ENCODE measurements at regions of chr14 and their contacts with region 1.

Region 1: DNA sequence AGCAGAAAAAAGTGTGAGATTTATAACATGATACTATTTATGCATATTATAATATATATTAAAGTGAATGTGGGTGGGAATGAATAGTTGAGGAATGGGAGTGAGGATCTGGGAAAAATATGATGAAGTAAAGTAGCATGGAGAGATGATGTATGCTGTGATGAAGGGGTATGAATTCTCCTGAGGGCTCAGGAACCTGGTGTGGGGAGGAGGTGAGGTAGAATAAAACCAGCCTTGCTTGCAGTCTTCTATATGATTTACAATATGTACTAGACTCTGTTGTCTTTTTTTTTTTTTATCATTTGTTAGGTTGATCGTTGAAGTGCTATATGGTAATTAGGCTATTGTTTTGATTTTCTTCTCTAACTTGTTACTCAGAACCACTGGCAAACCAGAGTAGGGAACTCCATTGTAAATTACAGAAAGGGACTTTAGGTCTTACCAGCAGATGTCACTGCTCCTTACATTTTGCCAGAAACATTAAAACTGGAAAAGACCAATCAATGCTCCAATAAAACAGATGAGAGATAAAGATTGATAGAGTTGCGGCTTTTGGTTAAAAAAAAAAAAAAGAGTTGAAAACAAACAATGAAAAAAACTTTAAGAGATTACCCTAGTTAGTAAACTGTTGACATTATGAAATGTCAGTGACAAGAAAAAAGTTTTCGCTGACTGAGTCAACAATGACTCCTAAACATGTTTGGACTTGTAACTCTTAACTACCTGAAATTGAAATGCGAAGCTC is 39.9 kb downstream of the ATL1 start:
- DNase-seq: no peak
- ATAC-seq: peak in 2 of 4 donors; percentile 68 to 88
- H3K4me3 ChIP-seq: no peak overlapping the region
- H3K27ac ChIP-seq: no peak overlapping the region
- H3K4me1 ChIP-seq: no peaks in the 10 kb centered on the region
- H3K27me3 ChIP-seq: no peaks in the 10 kb centered on the region
- CTCF ChIP-seq: peak; percentile 53

Region 2: GRCh38 chr14:50667996-50668825 is 68.3 kb after region 1 on chr14 and contains the start of gene SAV1:
- intact Hi-C with region 1: loop called in 1 of 2 experiments (anchors 5 kb)
- DNase-seq: peak; percentile 86 to 91
- ATAC-seq: peak; percentile 94 to 95 (median 95)
- H3K4me3 ChIP-seq: peak within 1 kb of the TSS; percentile 87
- H3K27ac ChIP-seq: peak within 1 kb of the TSS; percentile 97
- H3K4me1 ChIP-seq: peaks cover 12% of the 10 kb centered on the region
- H3K27me3 ChIP-seq: no peaks in the 10 kb centered on the region
- CTCF ChIP-seq: no peak
- total RNA-seq, gene SAV1: 18.1 to 37.1 (median 24.8) TPM

Region 3: DNA sequence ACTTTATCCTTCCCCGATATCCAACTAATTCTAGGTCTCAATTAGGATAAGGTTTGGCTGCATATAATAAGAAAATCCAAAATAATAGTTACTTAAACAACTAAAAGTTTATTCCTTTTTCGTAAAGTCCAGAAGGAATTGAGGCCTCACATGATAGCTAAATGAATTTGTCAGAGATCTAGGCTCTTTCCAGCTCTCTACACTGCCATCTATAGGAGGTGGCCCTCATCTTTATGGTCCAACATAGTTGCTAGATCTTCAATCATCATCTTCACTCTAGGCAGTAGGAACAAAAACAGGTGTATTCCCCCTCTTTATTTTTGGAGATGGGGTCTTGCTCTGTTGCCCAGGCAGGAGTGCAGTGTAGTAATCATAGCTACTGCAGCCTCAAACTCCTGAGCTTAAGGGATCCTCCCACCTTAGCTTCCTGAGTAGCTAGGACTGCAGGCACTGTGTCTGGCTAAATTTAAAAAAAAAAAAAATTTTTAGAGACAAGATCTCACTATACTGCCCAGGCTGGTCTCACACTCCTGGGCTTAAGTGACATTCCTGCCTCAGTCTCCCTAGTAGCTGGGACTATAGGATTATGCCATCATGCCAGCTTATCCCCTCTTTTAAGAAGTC is 114.7 kb after region 1 on chr14:
- intact Hi-C with region 1: loop called (anchors 5 to 10 kb)
- DNase-seq: no peak
- ATAC-seq: peak in 2 of 4 donors; percentile 59 to 66
- H3K4me3 ChIP-seq: no peak overlapping the region
- H3K27ac ChIP-seq: no peak overlapping the region
- H3K4me1 ChIP-seq: no peaks in the 10 kb centered on the region
- H3K27me3 ChIP-seq: no peaks in the 10 kb centered on the region
- CTCF ChIP-seq: peak; percentile 40

Region 4: DNA sequence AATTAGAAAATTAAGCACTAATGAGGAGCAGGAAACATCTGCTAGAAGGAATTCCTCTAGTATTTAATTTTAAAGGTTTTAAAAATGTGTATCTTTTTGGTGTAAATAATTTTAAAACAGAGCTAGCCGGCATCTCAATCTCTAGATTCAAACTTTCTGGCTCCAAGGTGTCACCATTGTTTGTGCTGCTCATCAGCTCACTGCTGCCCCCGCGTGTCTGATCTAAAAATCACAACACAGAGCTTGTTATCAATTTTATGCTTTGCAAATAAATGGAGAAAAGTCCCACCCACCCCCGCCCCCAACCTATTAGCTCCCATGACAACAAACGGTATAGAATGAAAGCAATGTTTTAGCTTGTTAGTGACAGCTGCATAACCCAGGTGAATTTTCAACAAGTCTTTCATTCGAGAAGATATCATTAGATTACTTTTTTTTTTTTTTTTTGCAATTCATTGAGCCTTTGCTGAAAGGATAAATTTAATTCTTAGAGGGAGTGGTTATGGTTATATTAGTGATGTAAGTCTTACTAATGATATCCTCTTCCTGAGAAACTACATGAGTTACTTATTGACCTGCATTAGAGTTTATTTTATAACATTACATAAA is 260.7 kb after region 1 on chr14:
- intact Hi-C with region 1: loop called in 1 of 2 experiments (anchors 5 kb)
- DNase-seq: peak; percentile 75 to 84
- ATAC-seq: peak; percentile 60 to 91 (median 76)
- H3K4me3 ChIP-seq: peak overlapping the region; percentile 77
- H3K27ac ChIP-seq: peak overlapping the region; percentile 83
- H3K4me1 ChIP-seq: peaks cover 20% of the 10 kb centered on the region
- H3K27me3 ChIP-seq: no peaks in the 10 kb centered on the region
- CTCF ChIP-seq: peak; percentile 83